Left ventricle myocardium superior (tissue), 1 donor: ENCODE measurements at regions of chr7 and their contacts with region 1.

Region 1: DNA sequence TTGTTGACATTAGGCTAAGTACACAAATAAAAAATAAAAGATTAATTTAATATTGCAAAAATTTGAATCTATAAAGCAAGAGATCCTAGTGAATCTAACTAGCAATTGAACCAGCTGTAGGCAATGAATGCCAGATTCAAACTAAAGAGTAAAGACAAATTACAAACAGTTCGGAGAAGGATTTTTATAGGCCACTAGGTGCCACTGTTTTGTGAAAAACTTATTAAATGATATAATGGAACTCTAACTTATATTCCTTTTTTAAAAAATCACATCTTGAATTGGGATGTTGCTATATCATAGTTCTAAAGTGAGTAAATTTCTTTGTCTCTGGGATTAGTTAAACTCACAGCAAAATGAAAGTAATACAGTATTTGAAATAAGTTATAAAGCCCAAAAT is 39.1 kb upstream of the GNAI1 start:
- DNase-seq: no peak
- ATAC-seq: no peak

Region 2: GRCh38 chr7:80392229-80393169 is 297.0 kb after region 1 on chr7:
- intact Hi-C with region 1: loop called (anchors 10 kb)
- DNase-seq: no peak
- ATAC-seq: no peak